CD8-positive, alpha-beta T cell (primary cell): ENCODE measurements at regions of chr3 and their contacts with region 1.

Region 1: DNA sequence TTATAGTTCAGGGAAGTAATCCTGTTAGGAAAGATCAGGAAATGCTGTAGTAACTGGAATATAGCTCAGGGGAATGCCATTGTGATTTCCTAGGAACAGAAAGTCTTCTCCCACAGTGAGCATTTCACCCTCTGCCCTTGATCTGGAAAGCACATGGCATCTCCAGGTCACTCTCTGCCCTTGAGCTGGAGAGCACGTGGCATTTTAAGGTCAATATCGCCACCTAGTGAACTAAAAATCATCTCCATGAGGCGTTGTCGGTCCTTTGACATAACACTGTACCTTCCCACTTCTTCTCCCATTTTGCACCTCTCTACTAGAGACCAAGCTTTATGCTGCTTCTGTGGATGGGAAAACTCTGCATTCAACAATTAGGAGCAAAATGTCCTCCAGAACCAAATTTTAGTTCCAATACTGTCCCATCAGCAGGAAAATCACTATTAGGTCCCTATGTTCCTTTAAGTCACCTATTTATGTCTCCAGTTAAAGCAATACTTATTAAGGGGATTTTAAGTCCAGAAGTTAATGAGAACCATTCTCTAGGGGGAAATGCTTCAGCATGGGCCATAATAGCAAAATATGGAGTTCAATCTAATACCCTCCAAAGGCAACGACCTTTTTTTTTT is 54.7 kb upstream of the GK5 start:
- DNase-seq: peak in 7 of 9 experiments; percentile 15 to 82 (median 38)
- ATAC-seq: peak; percentile 74
- H3K4me3 ChIP-seq: no peak overlapping the region
- H3K4me3 Mint-ChIP-seq: no peak overlapping the region
- H3K27ac ChIP-seq: no peak overlapping the region
- H3K27ac Mint-ChIP-seq: no peak overlapping the region
- H3K4me1 ChIP-seq: no peaks in the 10 kb centered on the region
- H3K4me1 Mint-ChIP-seq: peaks cover 11% of the 10 kb centered on the region
- H3K27me3 ChIP-seq: no peaks in the 10 kb centered on the region
- H3K27me3 Mint-ChIP-seq: peaks cover 5% of the 10 kb centered on the region
- CTCF ChIP-seq: peak; percentile 70

Region 2: DNA sequence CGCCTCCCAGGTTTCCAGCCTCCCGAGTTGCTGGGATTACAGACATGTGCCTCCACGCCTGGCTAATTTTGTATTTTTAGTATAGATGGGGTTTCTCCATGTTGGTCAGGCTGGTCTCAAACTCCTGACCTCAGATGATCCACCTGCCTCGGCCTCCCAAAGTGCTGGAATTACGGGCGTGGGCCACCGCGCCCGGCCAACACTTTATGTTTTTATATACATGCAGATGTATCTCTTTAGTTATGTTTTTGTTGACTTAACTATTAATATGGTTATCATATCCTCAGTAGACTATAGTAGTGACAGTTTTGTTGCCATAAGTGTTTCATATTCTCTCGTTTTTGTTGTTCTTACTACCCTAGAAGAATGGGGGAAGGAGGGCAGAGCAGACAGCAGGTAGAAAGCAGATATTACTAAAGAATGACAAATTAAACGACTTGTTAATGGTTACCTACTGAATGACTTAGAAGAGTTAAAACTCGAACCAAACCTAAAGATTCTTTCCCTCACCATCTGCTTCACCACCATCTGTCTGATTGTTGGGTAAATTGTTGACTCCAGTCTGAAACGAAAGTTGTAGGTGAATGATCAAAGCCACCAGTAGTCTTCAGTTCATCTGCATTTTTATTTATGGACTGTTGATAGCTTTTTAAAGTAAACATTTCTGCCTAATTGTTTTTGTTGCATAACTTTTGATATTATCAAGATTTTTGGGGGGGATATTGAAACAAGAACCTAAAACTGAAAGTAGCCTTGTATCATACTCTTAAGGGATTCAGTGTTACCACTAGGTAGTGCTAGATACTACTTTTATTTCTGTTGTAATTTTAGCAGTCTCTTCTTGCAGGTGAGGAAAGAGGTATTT is 704.0 kb before region 1 on chr3:
- CTCF ChIA-PET with region 1: no interaction called
- POLR2A ChIA-PET with region 1: no interaction called
- intact Hi-C with region 1: loop called (anchors 2 to 5 kb)
- DNase-seq: peak in 2 of 9 experiments; percentile 19 to 54
- ATAC-seq: peak; percentile 75
- H3K4me3 ChIP-seq: no peak overlapping the region
- H3K4me3 Mint-ChIP-seq: peak overlapping the region; percentile 64
- H3K27ac ChIP-seq: peak overlapping the region in 1 of 2 experiments; percentile 52
- H3K27ac Mint-ChIP-seq: peak overlapping the region; percentile 86
- H3K4me1 ChIP-seq: peaks cover 6% of the 10 kb centered on the region
- H3K4me1 Mint-ChIP-seq: peaks cover 11% of the 10 kb centered on the region
- H3K27me3 ChIP-seq: no peaks in the 10 kb centered on the region
- H3K27me3 Mint-ChIP-seq: no peaks in the 10 kb centered on the region
- CTCF ChIP-seq: peak; percentile 62

Region 3: GRCh38 chr3:142117056-142117851 is 162.8 kb before region 1 on chr3:
- CTCF ChIA-PET with region 1: interaction called, 12 read pairs
- POLR2A ChIA-PET with region 1: no interaction called
- intact Hi-C with region 1: no loop called
- DNase-seq: no peak
- ATAC-seq: no peak
- H3K4me3 ChIP-seq: no peak overlapping the region
- H3K4me3 Mint-ChIP-seq: no peak overlapping the region
- H3K27ac ChIP-seq: no peak overlapping the region
- H3K27ac Mint-ChIP-seq: no peak overlapping the region
- H3K4me1 ChIP-seq: no peaks in the 10 kb centered on the region
- H3K4me1 Mint-ChIP-seq: peaks cover 11% of the 10 kb centered on the region
- H3K27me3 ChIP-seq: no peaks in the 10 kb centered on the region
- H3K27me3 Mint-ChIP-seq: no peaks in the 10 kb centered on the region
- CTCF ChIP-seq: no peak

Region 4: GRCh38 chr3:142129516-142130171 is 150.4 kb before region 1 on chr3:
- CTCF ChIA-PET with region 1: interaction called, 35 read pairs
- POLR2A ChIA-PET with region 1: no interaction called
- intact Hi-C with region 1: loop called (anchors 1 kb)
- DNase-seq: no peak
- ATAC-seq: no peak
- H3K4me3 ChIP-seq: no peak overlapping the region
- H3K4me3 Mint-ChIP-seq: no peak overlapping the region
- H3K27ac ChIP-seq: peak overlapping the region in 1 of 2 experiments; percentile 63
- H3K27ac Mint-ChIP-seq: no peak overlapping the region
- H3K4me1 ChIP-seq: no peaks in the 10 kb centered on the region
- H3K4me1 Mint-ChIP-seq: peaks cover 3% of the 10 kb centered on the region
- H3K27me3 ChIP-seq: no peaks in the 10 kb centered on the region
- H3K27me3 Mint-ChIP-seq: no peaks in the 10 kb centered on the region
- CTCF ChIP-seq: no peak

Region 5: GRCh38 chr3:142263118-142263517 is 17.0 kb before region 1 on chr3:
- CTCF ChIA-PET with region 1: interaction called, 10 read pairs
- POLR2A ChIA-PET with region 1: no interaction called
- intact Hi-C with region 1: no loop called
- DNase-seq: no peak
- ATAC-seq: no peak
- H3K4me3 ChIP-seq: no peak overlapping the region
- H3K4me3 Mint-ChIP-seq: no peak overlapping the region
- H3K27ac ChIP-seq: no peak overlapping the region
- H3K27ac Mint-ChIP-seq: no peak overlapping the region
- H3K4me1 ChIP-seq: no peaks in the 10 kb centered on the region
- H3K4me1 Mint-ChIP-seq: no peaks in the 10 kb centered on the region
- H3K27me3 ChIP-seq: no peaks in the 10 kb centered on the region
- H3K27me3 Mint-ChIP-seq: no peaks in the 10 kb centered on the region
- CTCF ChIP-seq: no peak

Region 6: GRCh38 chr3:142315083-142315482 is 35.0 kb after region 1 on chr3:
- CTCF ChIA-PET with region 1: no interaction called
- POLR2A ChIA-PET with region 1: no interaction called
- intact Hi-C with region 1: no loop called
- DNase-seq: no peak
- ATAC-seq: no peak
- H3K4me3 ChIP-seq: no peak overlapping the region
- H3K4me3 Mint-ChIP-seq: no peak overlapping the region
- H3K27ac ChIP-seq: no peak overlapping the region
- H3K27ac Mint-ChIP-seq: no peak overlapping the region
- H3K4me1 ChIP-seq: no peaks in the 10 kb centered on the region
- H3K4me1 Mint-ChIP-seq: no peaks in the 10 kb centered on the region
- H3K27me3 ChIP-seq: no peaks in the 10 kb centered on the region
- H3K27me3 Mint-ChIP-seq: no peaks in the 10 kb centered on the region
- CTCF ChIP-seq: no peak

Region 7: DNA sequence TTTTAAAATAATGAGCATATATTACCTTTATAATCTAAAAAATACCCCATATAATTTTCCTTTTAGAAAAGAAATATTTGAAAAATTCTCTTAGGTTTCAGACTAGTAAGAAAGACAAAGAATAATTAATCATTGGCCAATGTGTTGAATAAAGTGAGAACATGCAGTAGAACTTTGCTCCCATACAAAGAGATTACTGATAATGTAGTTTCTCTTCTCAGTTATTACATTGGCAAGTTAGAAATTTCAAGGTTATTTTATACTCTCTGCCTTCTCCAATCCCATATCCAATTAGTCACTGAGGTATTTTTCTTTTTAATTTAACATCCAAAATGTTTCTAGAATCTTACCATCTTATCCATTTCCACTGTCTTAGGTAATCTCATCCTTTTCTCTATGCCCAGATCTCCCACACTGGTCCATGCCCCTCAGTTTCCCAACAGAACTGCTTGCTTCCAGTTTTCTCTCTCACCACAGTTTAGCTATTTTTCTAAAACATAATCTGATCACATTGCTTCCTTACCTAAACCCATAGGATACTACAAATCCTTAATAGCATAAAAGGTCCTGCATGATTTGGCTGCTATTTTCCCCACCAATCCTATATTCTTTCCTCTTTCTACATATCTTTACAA is 157.0 kb after region 1 on chr3:
- CTCF ChIA-PET with region 1: no interaction called
- POLR2A ChIA-PET with region 1: no interaction called
- intact Hi-C with region 1: no loop called
- DNase-seq: no peak
- ATAC-seq: no peak
- H3K4me3 ChIP-seq: no peak overlapping the region
- H3K4me3 Mint-ChIP-seq: no peak overlapping the region
- H3K27ac ChIP-seq: peak overlapping the region in 1 of 2 experiments; percentile 14
- H3K27ac Mint-ChIP-seq: peak overlapping the region; percentile 15
- H3K4me1 ChIP-seq: peaks cover 4% of the 10 kb centered on the region
- H3K4me1 Mint-ChIP-seq: peaks cover 62% of the 10 kb centered on the region
- H3K27me3 ChIP-seq: no peaks in the 10 kb centered on the region
- H3K27me3 Mint-ChIP-seq: no peaks in the 10 kb centered on the region
- CTCF ChIP-seq: no peak